Cardiac septum (tissue), 1 donor: ENCODE measurements at regions of chr20 and their contacts with region 1.

Region 1: DNA sequence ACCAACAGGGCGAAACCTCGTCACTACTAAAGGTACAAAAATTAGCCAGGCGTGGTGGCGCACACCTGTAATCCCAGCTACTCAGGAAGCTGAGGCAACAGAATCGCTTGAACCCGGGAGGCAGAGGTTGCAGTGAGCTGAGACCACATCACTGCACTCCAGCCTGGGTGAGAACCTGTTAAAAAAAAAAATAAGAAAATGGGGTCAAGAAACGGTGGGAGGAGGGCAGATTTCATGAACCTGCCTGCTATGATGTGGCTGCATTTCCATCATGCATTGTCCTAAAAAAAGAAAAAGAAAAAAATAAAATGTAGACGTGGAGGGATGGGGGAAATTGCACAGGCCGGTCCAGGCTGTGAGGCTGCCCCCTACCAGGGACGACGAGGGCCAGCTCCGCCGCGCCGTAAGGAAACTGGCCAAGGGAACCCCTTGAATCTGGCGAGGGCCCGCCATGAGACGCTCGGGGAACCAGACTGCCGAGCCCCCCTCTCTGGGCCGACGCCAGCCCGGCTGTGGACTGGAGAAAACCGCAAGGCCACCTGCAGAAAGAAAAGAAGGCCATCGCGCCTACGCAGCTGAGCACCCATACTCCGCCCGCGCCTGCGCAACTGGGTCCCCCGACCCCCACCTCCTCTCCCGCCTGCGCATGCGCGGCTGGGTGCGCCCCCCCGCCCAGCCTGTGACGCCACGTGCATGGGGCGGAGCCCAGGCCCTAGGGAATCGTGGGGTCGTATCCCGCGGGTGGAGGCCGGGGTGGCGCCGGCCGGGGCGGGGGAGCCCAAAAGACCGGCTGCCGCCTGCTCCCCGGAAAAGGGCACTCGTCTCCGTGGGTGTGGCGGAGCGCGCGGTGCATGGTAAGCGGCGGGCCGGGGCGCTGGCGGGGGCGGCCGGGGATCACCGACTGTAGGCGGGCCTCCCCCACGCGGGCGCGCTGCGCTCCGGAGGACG is at the start of gene ENTPD6:
- DNase-seq: peak; percentile 95
- total RNA-seq, gene ENTPD6: 102 TPM

Region 2: GRCh38 chr20:25136643-25137559 is 58.4 kb before region 1 on chr20:
- intact Hi-C with region 1: loop called (anchors 5 kb)
- DNase-seq: peak; percentile 90

Region 3: DNA sequence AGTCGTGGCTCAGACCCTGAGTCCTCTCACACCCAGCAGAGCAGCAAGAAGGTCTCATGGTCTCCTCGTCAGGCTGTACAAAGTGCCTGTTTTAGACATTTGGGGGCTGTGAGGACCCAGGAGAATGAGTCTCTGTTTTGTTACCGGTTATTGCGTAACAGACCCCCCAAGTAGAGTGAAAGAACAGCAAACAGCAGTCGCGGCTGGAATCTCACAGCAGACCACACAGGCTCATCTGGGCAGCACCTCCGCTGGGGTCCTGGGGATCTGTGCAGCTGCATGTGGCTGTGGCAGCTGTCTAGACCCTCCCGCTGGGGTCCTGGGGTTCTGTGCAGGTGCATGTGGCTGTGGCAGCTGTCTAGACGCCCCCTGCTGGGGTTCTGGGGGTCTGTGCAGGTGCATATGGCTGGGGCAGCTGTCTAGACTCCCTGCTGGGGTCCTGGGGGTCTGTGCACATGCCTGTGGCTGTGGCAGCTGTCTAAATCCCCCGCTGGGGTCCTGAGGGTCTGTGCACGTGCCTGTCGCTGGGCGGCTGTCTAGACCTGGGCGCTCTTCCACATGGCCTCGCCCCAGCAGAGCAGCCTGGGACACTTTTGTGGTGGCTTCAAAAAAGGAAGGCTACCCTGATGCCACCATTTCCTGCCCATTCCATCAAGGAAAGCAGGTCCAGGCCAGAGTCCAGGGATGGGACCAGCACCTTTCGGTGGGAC is 24.9 kb after region 1 on chr20:
- intact Hi-C with region 1: loop called (anchors 2 kb)
- DNase-seq: no peak

Region 4: GRCh38 chr20:25227317-25227831 is 32.1 kb after region 1 on chr20:
- intact Hi-C with region 1: loop called (anchors 2 kb)
- DNase-seq: no peak

Region 5: GRCh38 chr20:25247956-25248785 is 52.9 kb after region 1 on chr20 and contains the start of gene PYGB:
- intact Hi-C with region 1: loop called (anchors 1 kb)
- DNase-seq: peak; percentile 91
- total RNA-seq, gene PYGB: 386 TPM